ENCODE measurements at regions of chr4 and their contacts with region 1.

Region 1: DNA sequence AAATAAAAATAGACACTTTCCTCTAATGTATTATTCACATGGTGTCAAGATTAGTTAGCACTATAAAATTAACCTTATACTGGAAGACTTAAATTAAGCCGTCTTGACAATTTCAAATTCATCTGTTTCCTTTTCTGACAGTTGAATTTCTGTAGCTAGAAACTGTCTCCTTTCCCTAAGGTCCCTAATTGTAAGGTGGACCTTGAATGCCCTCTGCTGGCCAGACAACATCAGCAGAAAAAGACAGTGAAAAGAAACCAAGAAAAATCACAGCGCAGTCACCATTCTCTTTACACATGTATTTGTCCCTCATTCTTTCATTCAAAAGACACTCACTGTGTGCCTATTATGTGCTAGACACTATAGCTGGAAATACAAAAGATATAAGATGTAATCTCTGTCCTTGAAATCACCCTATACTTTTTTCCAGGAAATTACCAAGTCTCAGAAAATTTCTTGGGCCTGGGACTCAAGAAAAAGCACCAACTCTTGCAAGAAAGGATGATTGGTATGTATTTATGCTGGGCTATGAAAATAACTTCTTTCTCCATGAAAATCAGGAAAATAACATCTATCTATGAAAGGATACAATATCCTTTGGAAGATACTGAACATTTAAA is 32.7 kb upstream of the AMBN start:
- DNase-seq: peak; percentile 0
- H3K4me3 ChIP-seq: no peak overlapping the region
- CTCF ChIP-seq: peak; percentile 68

Region 2: DNA sequence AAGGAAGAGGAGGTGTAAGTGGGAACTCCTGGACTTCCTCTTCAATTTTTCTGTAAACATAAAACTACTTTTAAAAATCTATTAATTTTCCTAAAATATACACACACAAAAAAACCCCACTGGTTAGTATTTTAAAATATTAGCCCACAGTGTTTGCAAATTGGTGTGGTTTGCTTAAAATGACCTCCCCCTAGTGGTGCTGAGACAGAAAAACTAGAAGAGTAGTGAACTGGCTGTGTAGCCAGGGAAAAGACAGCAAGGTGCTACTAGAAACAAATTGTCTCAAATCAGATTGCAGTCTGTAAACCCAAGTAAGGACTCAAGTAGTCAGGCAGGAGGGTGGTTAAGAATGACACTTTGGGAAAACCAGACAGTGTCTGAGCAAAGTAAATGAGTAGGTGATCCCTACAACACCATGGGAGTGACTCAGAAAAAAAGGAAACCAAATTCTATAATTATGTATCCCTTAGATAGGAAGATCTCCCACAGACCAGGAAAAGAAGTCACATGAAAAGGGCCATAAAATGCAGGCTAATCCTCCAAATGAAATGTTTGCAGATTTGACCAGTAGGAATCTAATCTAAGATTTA is 14.9 kb before region 1 on chr4:
- CTCF ChIA-PET with region 1: interaction called, 11 read pairs
- POLR2A ChIA-PET with region 1: no interaction called
- DNase-seq: peak; percentile 9
- H3K4me3 ChIP-seq: no peak overlapping the region
- CTCF ChIP-seq: peak; percentile 40

Measured in AG04449 (cell line).